ENCODE measurements at regions of chr6 and their contacts with region 1.

Region 1: DNA sequence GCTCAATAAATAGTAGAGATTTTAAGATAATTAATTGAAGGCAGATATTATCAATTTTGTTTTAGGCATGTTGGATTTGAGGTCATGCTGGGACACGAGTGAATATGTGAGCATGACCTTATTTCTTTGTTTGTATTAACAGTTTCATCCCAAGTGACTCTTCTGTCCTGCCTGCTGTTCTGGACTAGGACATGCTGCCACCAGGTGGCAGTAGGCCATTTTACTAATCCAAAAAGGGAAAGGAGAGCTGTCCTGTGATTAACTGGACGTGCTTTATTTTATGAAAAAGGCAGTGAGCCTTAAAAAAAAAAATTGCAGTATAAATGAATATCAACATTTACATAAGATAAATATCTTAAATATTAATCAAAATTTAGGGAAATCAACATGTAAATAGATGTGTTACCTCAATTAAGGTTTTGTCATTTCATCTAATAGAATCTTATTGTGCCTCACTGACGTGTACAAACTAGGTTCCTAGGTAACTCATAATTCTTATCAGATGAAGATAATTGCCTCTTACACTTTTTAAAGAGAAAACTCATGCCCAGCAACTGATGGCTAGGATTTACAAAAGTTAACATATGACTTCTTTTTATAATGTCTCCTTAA is 49.8 kb downstream of the FRK start:
- DNase-seq: peak; percentile 54 to 71
- ATAC-seq: peak; percentile 53 to 82 (median 76)
- H3K4me3 ChIP-seq: no peak overlapping the region
- H3K27ac ChIP-seq: peak overlapping the region in 4 of 10 donors; percentile 6 to 82 (median 56)
- H3K4me1 ChIP-seq: peaks cover 0 to 57% (median 25%) of the 10 kb centered on the region in 9 donors
- H3K27me3 ChIP-seq: no peaks in the 10 kb centered on the region
- CTCF ChIP-seq: peak; percentile 48 to 90 (median 85)

Region 2: DNA sequence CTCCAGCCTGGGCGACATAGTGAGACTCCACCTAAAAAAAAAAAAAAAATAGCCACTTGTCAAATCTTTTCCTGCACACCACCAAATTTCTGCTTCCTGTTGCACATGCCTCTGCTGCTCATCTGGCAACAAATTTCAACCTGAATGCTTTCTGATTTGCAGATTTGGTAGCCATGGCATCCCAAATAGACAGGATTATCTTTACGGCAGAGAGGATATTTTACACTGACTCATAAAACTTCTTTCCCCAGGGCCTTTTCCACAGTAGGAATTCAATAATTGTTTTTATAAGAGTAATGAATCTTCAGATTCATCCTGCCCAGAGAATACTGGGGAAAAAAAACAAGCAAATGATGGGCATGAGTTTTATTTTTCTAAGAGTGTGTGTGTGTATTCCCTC is 214.8 kb before region 1 on chr6:
- intact Hi-C with region 1: no loop called
- DNase-seq: no peak
- ATAC-seq: no peak
- H3K4me3 ChIP-seq: no peak overlapping the region
- H3K27ac ChIP-seq: no peak overlapping the region
- H3K4me1 ChIP-seq: no peaks in the 10 kb centered on the region
- H3K27me3 ChIP-seq: no peaks in the 10 kb centered on the region
- CTCF ChIP-seq: no peak

Region 3: DNA sequence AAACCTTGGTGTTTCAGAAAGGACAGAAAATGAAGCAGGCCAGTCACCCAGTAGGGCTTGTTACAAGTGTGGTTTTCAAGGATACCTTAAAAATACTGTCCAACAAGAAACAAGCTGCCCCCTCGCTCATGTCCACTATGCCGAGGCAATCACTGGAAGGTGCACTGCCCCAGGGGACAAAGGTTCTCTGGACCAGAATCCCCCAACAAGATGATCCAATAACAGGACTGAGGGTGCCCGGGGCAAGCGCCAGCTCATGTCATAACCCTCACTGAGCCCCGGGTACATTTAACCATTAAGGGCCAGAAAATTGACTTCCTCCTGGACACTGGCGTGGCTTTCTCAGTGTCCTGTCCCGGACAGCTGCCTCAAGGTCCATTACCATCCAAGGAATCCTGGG is 83.1 kb after region 1 on chr6:
- intact Hi-C with region 1: loop called in 8 of 10 experiments (anchors 1 to 5 kb)
- DNase-seq: no peak
- ATAC-seq: no peak
- H3K4me3 ChIP-seq: no peak overlapping the region
- H3K27ac ChIP-seq: peak overlapping the region in 9 of 10 donors; percentile 30 to 64 (median 50)
- H3K4me1 ChIP-seq: peaks cover 0 to 23% (median 7%) of the 10 kb centered on the region in 9 donors
- H3K27me3 ChIP-seq: no peaks in the 10 kb centered on the region
- CTCF ChIP-seq: no peak

Region 4: GRCh38 chr6:116206231-116206903 is 195.5 kb after region 1 on chr6:
- intact Hi-C with region 1: loop called in 1 of 10 experiments (anchors 10 kb)
- DNase-seq: no peak
- ATAC-seq: no peak
- H3K4me3 ChIP-seq: no peak overlapping the region
- H3K27ac ChIP-seq: no peak overlapping the region
- H3K4me1 ChIP-seq: peaks cover 0 to 31% (median 13%) of the 10 kb centered on the region in 9 donors
- H3K27me3 ChIP-seq: no peaks in the 10 kb centered on the region
- CTCF ChIP-seq: no peak